Mammary epithelial cell (primary cell): ENCODE measurements at regions of chr21 and their contacts with region 1.

Region 1: DNA sequence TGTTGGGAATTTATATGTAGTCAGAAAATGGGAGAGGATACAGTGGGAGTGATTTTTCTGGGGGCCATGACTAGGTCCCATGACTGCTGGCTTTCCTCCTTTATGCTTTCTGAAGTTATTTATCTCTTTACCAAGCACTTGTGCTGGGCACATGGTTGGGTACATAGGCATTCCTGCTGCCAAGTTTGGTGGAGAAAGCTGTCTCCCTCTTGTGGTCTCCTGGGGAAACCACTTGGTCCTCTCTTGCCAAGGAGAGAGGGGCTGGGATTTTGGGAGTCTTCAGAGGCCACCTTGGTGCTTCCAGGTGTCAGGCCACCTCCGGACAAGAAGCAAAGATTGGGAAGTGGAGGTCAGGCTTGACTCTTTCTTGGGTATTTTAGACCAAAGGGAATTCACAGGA is 120.2 kb upstream of the KCNE2 start:
- DNase-seq: peak; percentile 16
- H3K4me3 ChIP-seq: no peak overlapping the region
- H3K27ac ChIP-seq: no peak overlapping the region
- H3K4me1 ChIP-seq: no peaks in the 10 kb centered on the region
- H3K27me3 ChIP-seq: no peaks in the 10 kb centered on the region
- CTCF ChIP-seq: peak; percentile 55 to 74

Region 2: DNA sequence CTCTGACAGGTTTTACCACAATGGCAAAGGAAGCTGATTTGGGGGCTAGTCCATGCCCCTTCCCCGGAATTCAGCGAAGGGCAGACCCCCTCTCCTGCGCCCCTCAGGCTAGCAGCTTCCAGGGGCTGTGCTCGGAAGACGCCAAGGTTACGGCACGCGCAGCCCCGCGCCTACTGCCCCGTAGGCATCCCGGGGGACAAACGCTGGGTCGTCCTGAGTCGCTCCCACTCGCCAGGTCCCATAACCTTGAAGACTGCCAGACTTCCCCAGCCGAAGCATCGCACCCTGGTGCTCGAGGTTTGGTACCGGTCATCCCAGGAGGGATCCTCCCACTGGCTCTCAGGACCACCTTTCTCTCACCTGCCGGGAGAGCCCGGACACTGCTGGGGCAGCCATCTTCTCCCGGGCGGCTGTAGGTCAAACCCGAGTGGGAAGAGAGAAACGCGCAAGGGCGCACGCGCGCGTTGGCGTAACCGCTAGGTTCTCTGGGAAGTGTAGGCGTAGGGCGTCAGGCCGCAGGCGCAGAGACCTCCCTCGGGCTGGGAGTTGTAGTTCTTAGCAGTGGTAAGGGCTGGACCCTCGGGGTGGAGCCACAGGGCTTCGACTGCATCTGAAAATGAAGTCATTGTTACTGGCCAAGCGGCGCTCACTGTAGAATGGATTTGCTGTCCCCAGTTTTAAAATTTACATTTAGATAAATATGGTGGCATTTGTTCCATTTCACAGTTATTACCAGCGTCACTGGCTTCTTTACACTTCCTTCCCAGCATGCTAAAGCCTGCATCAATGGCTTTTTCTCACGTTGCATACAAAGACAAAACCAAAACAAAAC is 328.0 kb before region 1 on chr21 and contains the start of gene ATP5PO:
- CTCF ChIA-PET with region 1: no interaction called
- dilution Hi-C with region 1: no loop called
- in situ Hi-C with region 1: loop called (anchors 10 to 25 kb)
- intact Hi-C with region 1: no loop called
- DNase-seq: peak; percentile 94
- H3K4me3 ChIP-seq: peak within 1 kb of the TSS; percentile 81 to 98 (median 91)
- H3K27ac ChIP-seq: peak within 1 kb of the TSS; percentile 77
- H3K4me1 ChIP-seq: peaks cover 14% of the 10 kb centered on the region
- H3K27me3 ChIP-seq: no peaks in the 10 kb centered on the region
- CTCF ChIP-seq: no peak
- total RNA-seq, gene ATP5PO: 84.7 to 157 TPM

Region 3: GRCh38 chr21:34215911-34216717 is 27.4 kb before region 1 on chr21:
- CTCF ChIA-PET with region 1: no interaction called
- dilution Hi-C with region 1: no loop called
- in situ Hi-C with region 1: no loop called
- intact Hi-C with region 1: no loop called
- DNase-seq: no peak
- H3K4me3 ChIP-seq: no peak overlapping the region
- H3K27ac ChIP-seq: no peak overlapping the region
- H3K4me1 ChIP-seq: no peaks in the 10 kb centered on the region
- H3K27me3 ChIP-seq: no peaks in the 10 kb centered on the region
- CTCF ChIP-seq: no peak

Region 4: GRCh38 chr21:34351786-34352241 is 108.3 kb after region 1 on chr21:
- CTCF ChIA-PET with region 1: no interaction called
- dilution Hi-C with region 1: no loop called
- in situ Hi-C with region 1: no loop called
- intact Hi-C with region 1: loop called (anchors 2 kb)
- DNase-seq: no peak
- H3K4me3 ChIP-seq: no peak overlapping the region
- H3K27ac ChIP-seq: no peak overlapping the region
- H3K4me1 ChIP-seq: no peaks in the 10 kb centered on the region
- H3K27me3 ChIP-seq: peaks cover 2% of the 10 kb centered on the region
- CTCF ChIP-seq: peak; percentile 38 to 55

Region 5: DNA sequence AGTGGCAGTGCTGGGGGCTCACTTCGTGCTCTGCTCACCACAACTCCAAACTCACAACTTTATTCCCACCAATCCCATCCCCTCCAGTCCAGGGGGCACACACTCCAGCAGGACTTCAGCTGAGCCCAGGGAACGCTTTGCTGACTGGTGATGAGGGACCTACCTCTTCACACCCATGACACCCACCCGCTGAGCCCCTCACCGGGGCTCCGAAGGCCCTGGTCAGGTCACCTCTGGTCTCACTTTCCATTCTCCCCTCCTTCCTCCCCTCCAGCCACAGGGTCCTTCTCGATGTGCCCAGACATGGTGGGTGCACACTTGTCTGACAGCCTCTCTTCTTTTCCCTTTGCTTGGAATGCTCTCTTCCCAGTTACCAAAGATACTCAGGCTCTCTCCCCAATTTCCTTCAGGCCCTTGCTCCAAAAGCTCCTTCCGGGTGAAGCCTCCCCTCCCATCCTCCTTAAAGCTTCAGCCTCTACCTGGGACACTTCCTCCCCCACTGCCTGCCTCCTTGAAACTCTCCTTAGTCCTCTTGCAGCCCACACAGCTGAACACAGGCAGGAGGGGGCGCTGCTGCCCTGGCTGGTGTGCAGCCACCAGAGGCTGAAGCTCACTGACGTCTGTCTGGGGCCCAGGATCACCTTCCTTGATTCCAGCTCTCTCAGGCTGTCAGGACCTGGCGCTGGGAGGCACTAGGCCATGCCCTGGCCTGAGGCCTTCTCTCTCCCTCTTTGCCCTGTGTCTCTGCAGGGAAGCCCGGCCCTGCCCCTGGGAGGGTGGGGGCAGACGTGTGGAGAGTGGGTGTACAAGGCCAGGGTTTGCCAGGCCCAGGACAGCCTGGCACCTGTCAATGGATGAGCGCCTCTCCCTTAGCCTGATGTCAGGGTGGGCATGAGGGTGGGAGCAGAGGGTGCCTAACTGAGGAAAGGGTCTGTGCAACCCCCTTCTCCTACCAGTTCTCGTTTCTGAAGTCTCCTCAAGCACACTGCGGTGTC is 266.9 kb after region 1 on chr21:
- CTCF ChIA-PET with region 1: no interaction called
- dilution Hi-C with region 1: no loop called
- in situ Hi-C with region 1: no loop called
- intact Hi-C with region 1: no loop called
- DNase-seq: peak; percentile 39
- H3K4me3 ChIP-seq: no peak overlapping the region
- H3K27ac ChIP-seq: no peak overlapping the region
- H3K4me1 ChIP-seq: no peaks in the 10 kb centered on the region
- H3K27me3 ChIP-seq: no peaks in the 10 kb centered on the region
- CTCF ChIP-seq: peak; percentile 75 to 90

Region 6: DNA sequence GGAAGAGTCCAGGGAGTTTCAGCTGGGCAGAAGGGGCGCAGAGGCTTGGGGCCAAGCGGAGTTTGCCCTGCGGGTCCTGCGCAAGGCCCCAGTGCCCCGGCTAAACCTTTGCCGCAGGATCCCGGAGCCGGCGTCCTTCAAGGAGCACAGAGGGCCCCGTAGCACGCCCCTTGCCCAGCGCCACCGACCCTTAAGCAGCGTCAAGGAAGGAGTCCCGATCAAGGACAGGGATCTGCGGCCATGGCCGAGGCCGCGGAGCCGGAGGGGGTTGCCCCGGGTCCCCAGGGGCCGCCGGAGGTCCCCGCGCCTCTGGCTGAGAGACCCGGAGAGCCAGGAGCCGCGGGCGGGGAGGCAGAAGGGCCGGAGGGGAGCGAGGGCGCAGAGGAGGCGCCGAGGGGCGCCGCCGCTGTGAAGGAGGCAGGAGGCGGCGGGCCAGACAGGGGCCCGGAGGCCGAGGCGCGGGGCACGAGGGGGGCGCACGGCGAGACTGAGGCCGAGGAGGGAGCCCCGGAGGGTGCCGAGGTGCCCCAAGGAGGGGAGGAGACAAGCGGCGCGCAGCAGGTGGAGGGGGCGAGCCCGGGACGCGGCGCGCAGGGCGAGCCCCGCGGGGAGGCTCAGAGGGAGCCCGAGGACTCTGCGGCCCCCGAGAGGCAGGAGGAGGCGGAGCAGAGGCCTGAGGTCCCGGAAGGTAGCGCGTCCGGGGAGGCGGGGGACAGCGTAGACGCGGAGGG is 425.8 kb after region 1 on chr21:
- CTCF ChIA-PET with region 1: no interaction called
- dilution Hi-C with region 1: no loop called
- in situ Hi-C with region 1: loop called in 1 of 2 experiments (anchors 25 kb)
- intact Hi-C with region 1: no loop called
- DNase-seq: no peak
- H3K4me3 ChIP-seq: no peak overlapping the region
- H3K27ac ChIP-seq: no peak overlapping the region
- H3K4me1 ChIP-seq: peaks cover 7% of the 10 kb centered on the region
- H3K27me3 ChIP-seq: peaks cover 34% of the 10 kb centered on the region
- CTCF ChIP-seq: no peak